PC-9 (cell line): ENCODE measurements at regions of chr10 and their contacts with region 1.

Region 1: DNA sequence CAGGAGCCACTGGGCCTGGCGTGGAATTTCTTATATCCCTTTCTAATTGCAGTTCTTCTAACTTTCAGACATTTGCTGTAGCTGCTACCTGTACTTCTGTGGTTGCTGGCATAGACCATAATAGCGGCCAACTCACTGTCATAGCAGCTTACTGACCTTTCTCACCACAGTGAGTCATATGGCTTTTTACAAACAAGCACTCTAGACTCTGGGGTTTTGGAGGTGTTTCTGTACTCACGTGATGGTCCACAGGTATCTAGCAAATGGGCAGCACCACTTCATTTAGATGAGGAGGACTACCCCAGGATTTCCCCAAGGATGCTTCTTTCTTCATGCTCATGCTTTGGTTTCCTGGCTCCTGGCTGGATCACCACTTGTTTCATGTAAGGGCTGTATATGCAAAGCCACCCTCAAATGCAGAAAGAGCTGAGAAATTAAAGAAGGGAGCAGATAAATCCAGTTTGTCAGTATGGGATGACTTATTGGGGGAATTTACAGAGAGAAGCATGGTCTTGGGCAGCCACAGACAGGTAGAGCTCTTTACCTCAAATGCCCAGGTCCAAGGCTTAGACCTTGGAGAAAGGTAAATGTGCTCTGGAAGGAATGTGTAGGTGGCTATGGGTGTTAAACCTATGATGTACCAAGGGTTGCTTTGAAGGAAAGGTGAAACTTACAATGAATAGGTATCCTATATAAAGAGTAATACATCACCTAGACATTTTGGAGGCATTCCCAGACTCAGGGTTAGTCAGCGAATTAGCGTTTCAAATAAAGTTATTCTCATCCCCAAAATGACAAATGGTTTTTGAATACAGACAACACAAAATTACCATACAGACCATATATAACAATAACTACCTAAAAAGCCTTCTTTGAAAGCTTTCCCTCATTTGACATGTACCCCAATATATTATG is 15.9 kb upstream of the SLC25A16 start:
- DNase-seq: peak; percentile 63 to 95
- H3K4me3 ChIP-seq: no peak overlapping the region
- H3K27ac ChIP-seq: peak overlapping the region; percentile 58
- H3K4me1 ChIP-seq: peaks cover 30% of the 10 kb centered on the region
- H3K27me3 ChIP-seq: no peaks in the 10 kb centered on the region
- CTCF ChIP-seq: no peak

Region 2: GRCh38 chr10:68705548-68705947 is 162.3 kb after region 1 on chr10:
- CTCF ChIA-PET with region 1: no interaction called
- POLR2A ChIA-PET with region 1: interaction called, 16 read pairs
- intact Hi-C with region 1: no loop called
- DNase-seq: no peak
- H3K4me3 ChIP-seq: no peak overlapping the region
- H3K27ac ChIP-seq: no peak overlapping the region
- H3K4me1 ChIP-seq: no peaks in the 10 kb centered on the region
- H3K27me3 ChIP-seq: no peaks in the 10 kb centered on the region
- CTCF ChIP-seq: no peak